PC-3 (cell line): ENCODE measurements at regions of chr1 and their contacts with region 1.

Region 1: GRCh38 chr1:28877132-28877781 is 37.1 kb upstream of the EPB41 start:
- DNase-seq: peak; percentile 87
- ATAC-seq: peak; percentile 77
- H3K4me3 ChIP-seq: no peak overlapping the region
- H3K27ac ChIP-seq: no peak overlapping the region
- H3K4me1 ChIP-seq: peaks cover 4% of the 10 kb centered on the region
- H3K27me3 ChIP-seq: no peaks in the 10 kb centered on the region
- CTCF ChIP-seq: peak; percentile 95

Region 2: DNA sequence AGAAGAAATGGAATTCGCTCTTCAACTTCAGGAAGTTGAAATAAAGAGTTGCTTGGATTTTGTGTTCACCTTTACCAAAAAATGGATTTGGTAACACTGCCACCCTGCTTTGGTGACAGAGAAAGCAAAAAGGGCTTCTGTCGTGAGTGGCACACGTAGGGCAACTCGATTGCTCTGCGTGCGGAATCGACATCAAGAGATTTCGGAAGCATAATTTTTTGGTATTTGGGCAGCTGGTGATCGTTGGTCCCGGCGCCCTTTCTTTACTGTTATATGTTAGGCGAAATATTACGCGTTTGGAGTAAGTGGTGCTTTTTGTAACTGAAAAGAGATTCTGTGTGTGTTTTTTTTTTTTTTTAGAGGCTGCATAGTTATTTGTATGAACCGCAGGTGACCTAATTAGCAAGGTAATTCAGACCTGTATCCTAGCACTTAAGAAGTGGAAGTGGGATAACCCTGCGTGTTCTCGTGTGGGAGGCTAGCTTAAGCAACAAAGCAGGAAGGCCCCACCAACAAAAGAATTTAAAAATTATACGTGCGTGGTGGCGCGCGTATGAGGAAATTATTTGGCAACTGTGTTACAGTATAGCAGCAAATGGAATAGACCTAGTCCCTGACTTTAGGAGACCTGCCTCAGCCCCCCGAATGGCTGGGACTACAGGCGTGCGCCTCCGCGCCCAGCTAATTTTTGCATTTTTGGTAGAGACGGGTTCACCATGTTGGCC is 228.6 kb before region 1 on chr1 and contains the start of gene RNU11:
- CTCF ChIA-PET with region 1: no interaction called
- POLR2A ChIA-PET with region 1: interaction called, 5 read pairs
- intact Hi-C with region 1: loop called (anchors 2 kb)
- DNase-seq: peak; percentile 98
- ATAC-seq: peak; percentile 80
- H3K4me3 ChIP-seq: peak within 1 kb of the TSS; percentile 48
- H3K27ac ChIP-seq: peak within 1 kb of the TSS; percentile 93
- H3K4me1 ChIP-seq: peaks cover 17% of the 10 kb centered on the region
- H3K27me3 ChIP-seq: no peaks in the 10 kb centered on the region
- CTCF ChIP-seq: no peak
- total RNA-seq, gene RNU11: not detected in 2 replicates

Region 3: DNA sequence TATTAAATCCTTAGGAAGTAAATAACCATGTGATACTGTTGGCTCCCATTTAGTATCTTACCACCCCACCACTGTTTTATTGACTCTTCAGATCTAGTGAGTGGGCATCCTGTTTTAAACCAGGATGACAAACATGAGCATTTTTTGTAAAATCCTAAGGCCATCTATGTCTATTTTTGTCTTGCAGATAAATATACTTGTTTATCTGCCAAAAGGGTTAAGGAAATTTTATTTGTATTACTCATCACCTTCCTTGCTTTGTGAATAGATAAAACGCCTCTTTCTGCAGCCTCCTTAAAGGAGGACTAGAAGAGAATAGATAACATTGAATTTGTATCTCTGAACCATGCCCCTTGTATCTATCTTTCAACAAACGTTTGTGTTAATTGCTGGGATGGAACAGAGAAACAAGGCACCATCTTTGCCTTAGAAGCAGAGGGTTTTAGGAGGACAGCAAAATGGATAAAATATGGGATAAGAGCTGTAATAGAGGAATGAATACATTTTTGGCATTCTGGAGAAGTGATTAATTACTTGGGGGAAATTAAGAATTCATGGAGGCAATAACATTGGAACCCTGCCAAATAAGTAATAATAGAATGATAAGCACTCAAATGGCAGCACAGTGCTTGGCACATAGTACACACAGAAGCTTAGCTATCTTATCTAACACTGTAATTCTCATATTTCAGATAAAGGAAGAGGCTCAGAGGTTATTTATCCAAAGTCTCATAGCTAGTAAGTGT is 125.8 kb before region 1 on chr1:
- CTCF ChIA-PET with region 1: interaction called, 10 read pairs
- POLR2A ChIA-PET with region 1: interaction called, 12 read pairs
- intact Hi-C with region 1: no loop called
- DNase-seq: peak; percentile 75
- ATAC-seq: peak; percentile 58
- H3K4me3 ChIP-seq: 0 out of 2 replicates have a peak overlapping the region, but pooled peaks have one; percentile 19
- H3K27ac ChIP-seq: peak overlapping the region; percentile 36
- H3K4me1 ChIP-seq: peaks cover 35% of the 10 kb centered on the region
- H3K27me3 ChIP-seq: no peaks in the 10 kb centered on the region
- CTCF ChIP-seq: no peak

Region 4: GRCh38 chr1:28756846-28757245 is 120.4 kb before region 1 on chr1:
- CTCF ChIA-PET with region 1: interaction called, 3 read pairs
- POLR2A ChIA-PET with region 1: interaction called, 12 read pairs
- intact Hi-C with region 1: no loop called
- DNase-seq: peak; percentile 15
- ATAC-seq: peak; percentile 67
- H3K4me3 ChIP-seq: no peak overlapping the region
- H3K27ac ChIP-seq: no peak overlapping the region
- H3K4me1 ChIP-seq: peaks cover 3% of the 10 kb centered on the region; the same call in 1 of the 2 replicates
- H3K27me3 ChIP-seq: no peaks in the 10 kb centered on the region
- CTCF ChIP-seq: peak; percentile 56

Region 5: GRCh38 chr1:28779751-28780408 is 97.4 kb before region 1 on chr1:
- CTCF ChIA-PET with region 1: interaction called, 22 read pairs
- POLR2A ChIA-PET with region 1: no interaction called
- intact Hi-C with region 1: loop called (anchors 1 kb)
- DNase-seq: no peak
- ATAC-seq: no peak
- H3K4me3 ChIP-seq: no peak overlapping the region
- H3K27ac ChIP-seq: no peak overlapping the region
- H3K4me1 ChIP-seq: no peaks in the 10 kb centered on the region
- H3K27me3 ChIP-seq: no peaks in the 10 kb centered on the region
- CTCF ChIP-seq: no peak

Region 6: DNA sequence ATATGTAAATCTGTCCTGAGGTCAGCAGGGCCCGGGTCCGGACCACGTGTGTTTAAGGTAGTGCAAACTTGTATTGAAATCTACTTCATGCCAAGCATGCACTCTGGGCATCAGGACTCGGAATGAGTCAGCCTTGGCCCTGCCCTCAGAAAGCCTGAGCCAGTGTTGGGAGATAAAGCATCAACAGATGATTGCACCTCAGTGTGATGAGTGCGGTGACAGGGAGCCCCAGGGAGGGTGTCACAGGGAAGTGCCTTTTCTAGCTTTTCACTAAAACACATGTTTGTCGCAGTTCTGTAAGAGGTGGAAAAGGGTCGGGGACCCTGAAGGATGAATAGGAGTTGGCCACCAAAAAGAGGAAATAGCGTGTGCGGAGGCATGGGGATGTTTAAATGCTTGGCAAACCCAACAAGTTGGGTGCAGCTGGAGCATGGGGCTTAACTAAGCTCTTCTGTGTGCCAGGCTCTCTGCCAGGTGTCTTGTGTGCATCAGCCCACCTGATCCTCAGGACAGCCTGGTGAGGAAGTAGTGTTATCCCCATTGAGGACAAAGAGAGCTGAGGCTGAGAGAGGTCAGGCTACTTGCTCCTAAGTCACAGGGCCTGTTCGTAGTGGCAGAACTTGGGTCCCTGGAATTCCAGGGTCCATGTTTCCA is 11.1 kb before region 1 on chr1:
- CTCF ChIA-PET with region 1: interaction called, 10 read pairs
- POLR2A ChIA-PET with region 1: no interaction called
- intact Hi-C with region 1: no loop called
- DNase-seq: peak; percentile 47
- ATAC-seq: peak; percentile 74
- H3K4me3 ChIP-seq: no peak overlapping the region
- H3K27ac ChIP-seq: no peak overlapping the region
- H3K4me1 ChIP-seq: no peaks in the 10 kb centered on the region
- H3K27me3 ChIP-seq: no peaks in the 10 kb centered on the region; the same call in 1 of the 2 replicates
- CTCF ChIP-seq: no peak

Region 7: GRCh38 chr1:29050166-29050565 is 172.9 kb after region 1 on chr1:
- CTCF ChIA-PET with region 1: no interaction called
- POLR2A ChIA-PET with region 1: no interaction called
- intact Hi-C with region 1: no loop called
- DNase-seq: no peak
- ATAC-seq: no peak
- H3K4me3 ChIP-seq: no peak overlapping the region
- H3K27ac ChIP-seq: no peak overlapping the region
- H3K4me1 ChIP-seq: no peaks in the 10 kb centered on the region
- H3K27me3 ChIP-seq: no peaks in the 10 kb centered on the region
- CTCF ChIP-seq: no peak

Region 8: GRCh38 chr1:29062157-29062942 is 185.1 kb after region 1 on chr1:
- CTCF ChIA-PET with region 1: no interaction called
- POLR2A ChIA-PET with region 1: no interaction called
- intact Hi-C with region 1: no loop called
- DNase-seq: no peak
- ATAC-seq: no peak
- H3K4me3 ChIP-seq: no peak overlapping the region
- H3K27ac ChIP-seq: no peak overlapping the region
- H3K4me1 ChIP-seq: no peaks in the 10 kb centered on the region
- H3K27me3 ChIP-seq: no peaks in the 10 kb centered on the region
- CTCF ChIP-seq: no peak